CD4-positive, alpha-beta memory T cell (primary cell): ENCODE measurements at regions of chr5 and their contacts with region 1.

Region 1: GRCh38 chr5:123610665-123611405 is 98.9 kb downstream of the CSNK1G3 start:
- DNase-seq: peak; percentile 47 to 60 (median 56)
- H3K4me3 ChIP-seq: no peak overlapping the region
- H3K4me3 Mint-ChIP-seq: no peak overlapping the region
- H3K27ac ChIP-seq: no peak overlapping the region
- H3K27ac Mint-ChIP-seq: peak overlapping the region in 4 of 7 donors; percentile 58 to 90 (median 90)
- H3K4me1 ChIP-seq: no peaks in the 10 kb centered on the region
- H3K4me1 Mint-ChIP-seq: peaks cover 0 to 6% (median 2%) of the 10 kb centered on the region in 4 donors
- H3K27me3 ChIP-seq: no peaks in the 10 kb centered on the region
- H3K27me3 Mint-ChIP-seq: no peaks in the 10 kb centered on the region

Region 2: GRCh38 chr5:122515709-122516431 is 1095.0 kb before region 1 on chr5:
- CTCF ChIA-PET with region 1: no interaction called
- POLR2A ChIA-PET with region 1: no interaction called
- intact Hi-C with region 1: loop called (anchors 5 kb)
- DNase-seq: no peak
- H3K4me3 ChIP-seq: no peak overlapping the region
- H3K4me3 Mint-ChIP-seq: no peak overlapping the region
- H3K27ac ChIP-seq: no peak overlapping the region
- H3K27ac Mint-ChIP-seq: no peak overlapping the region
- H3K4me1 ChIP-seq: no peaks in the 10 kb centered on the region
- H3K4me1 Mint-ChIP-seq: no peaks in the 10 kb centered on the region
- H3K27me3 ChIP-seq: no peaks in the 10 kb centered on the region
- H3K27me3 Mint-ChIP-seq: peaks cover 0 to 1% of the 10 kb centered on the region in 2 donors

Region 3: GRCh38 chr5:122896598-122897282 is 714.1 kb before region 1 on chr5:
- CTCF ChIA-PET with region 1: interaction called, 6 read pairs
- POLR2A ChIA-PET with region 1: no interaction called
- intact Hi-C with region 1: loop called (anchors 1 kb)
- DNase-seq: no peak
- H3K4me3 ChIP-seq: no peak overlapping the region
- H3K4me3 Mint-ChIP-seq: no peak overlapping the region
- H3K27ac ChIP-seq: no peak overlapping the region
- H3K27ac Mint-ChIP-seq: no peak overlapping the region
- H3K4me1 ChIP-seq: peaks cover 3% of the 10 kb centered on the region
- H3K4me1 Mint-ChIP-seq: peaks cover 2 to 8% (median 3%) of the 10 kb centered on the region in 4 donors
- H3K27me3 ChIP-seq: no peaks in the 10 kb centered on the region
- H3K27me3 Mint-ChIP-seq: no peaks in the 10 kb centered on the region